ENCODE measurements at regions of chr4 and their contacts with region 1.

Region 1: DNA sequence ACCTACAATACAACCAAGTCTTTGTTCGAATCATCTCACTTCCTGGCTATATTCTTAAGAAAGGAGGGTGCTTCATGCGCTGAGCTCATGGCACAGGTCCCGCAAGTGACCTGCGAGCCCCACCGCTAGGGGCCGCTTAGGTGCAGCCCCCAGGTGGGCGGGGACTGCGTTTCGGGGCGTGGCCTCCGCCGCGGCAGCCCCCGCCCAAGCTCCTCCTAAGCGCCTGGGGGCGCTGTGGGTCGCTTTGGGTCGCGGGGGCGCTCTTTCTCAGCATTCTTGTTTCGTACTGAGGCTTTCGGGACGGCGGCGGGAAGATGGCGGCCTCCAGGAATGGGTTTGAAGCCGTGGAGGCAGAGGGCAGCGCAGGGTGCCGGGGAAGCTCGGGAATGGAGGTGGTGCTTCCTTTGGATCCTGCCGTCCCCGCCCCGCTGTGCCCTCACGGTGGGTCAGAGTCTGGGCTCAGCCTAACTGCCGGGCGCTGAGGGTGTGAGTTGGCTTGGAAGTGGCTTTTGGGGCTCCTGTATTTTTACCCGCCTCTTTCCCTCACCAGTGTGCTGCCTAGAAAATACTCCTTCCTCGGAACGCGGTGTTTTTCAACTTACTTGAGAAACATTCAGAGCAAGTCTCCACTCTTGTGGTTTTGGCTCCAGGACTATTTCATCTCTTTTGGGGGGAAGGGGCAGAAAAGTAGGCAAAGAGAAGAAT is at the start of gene ZCCHC4:
- DNase-seq: peak; percentile 89
- ATAC-seq: peak; percentile 100
- H3K4me3 Mint-ChIP-seq: peak within 1 kb of the TSS; percentile 99
- H3K27ac Mint-ChIP-seq: peak within 1 kb of the TSS; percentile 94
- H3K4me1 Mint-ChIP-seq: peaks cover 28% of the 10 kb centered on the region
- H3K27me3 Mint-ChIP-seq: peaks cover 2% of the 10 kb centered on the region
- CTCF ChIP-seq: peak; percentile 93
- total RNA-seq, gene ZCCHC4: 12.0 to 12.8 TPM

Region 2: GRCh38 chr4:25180524-25181131 is 132.0 kb before region 1 on chr4:
- CTCF ChIA-PET with region 1: interaction called, 12 read pairs
- POLR2A ChIA-PET with region 1: no interaction called
- intact Hi-C with region 1: no loop called
- DNase-seq: peak; percentile 57
- ATAC-seq: peak; percentile 71
- H3K4me3 Mint-ChIP-seq: no peak overlapping the region
- H3K27ac Mint-ChIP-seq: no peak overlapping the region
- H3K4me1 Mint-ChIP-seq: peaks cover 21% of the 10 kb centered on the region
- H3K27me3 Mint-ChIP-seq: no peaks in the 10 kb centered on the region
- CTCF ChIP-seq: peak; percentile 84

Region 3: GRCh38 chr4:25271866-25272265 is 40.8 kb before region 1 on chr4:
- CTCF ChIA-PET with region 1: interaction called, 10 read pairs
- POLR2A ChIA-PET with region 1: no interaction called
- intact Hi-C with region 1: no loop called
- DNase-seq: no peak
- ATAC-seq: no peak
- H3K4me3 Mint-ChIP-seq: no peak overlapping the region
- H3K27ac Mint-ChIP-seq: no peak overlapping the region
- H3K4me1 Mint-ChIP-seq: no peaks in the 10 kb centered on the region
- H3K27me3 Mint-ChIP-seq: no peaks in the 10 kb centered on the region
- CTCF ChIP-seq: no peak

Region 4: DNA sequence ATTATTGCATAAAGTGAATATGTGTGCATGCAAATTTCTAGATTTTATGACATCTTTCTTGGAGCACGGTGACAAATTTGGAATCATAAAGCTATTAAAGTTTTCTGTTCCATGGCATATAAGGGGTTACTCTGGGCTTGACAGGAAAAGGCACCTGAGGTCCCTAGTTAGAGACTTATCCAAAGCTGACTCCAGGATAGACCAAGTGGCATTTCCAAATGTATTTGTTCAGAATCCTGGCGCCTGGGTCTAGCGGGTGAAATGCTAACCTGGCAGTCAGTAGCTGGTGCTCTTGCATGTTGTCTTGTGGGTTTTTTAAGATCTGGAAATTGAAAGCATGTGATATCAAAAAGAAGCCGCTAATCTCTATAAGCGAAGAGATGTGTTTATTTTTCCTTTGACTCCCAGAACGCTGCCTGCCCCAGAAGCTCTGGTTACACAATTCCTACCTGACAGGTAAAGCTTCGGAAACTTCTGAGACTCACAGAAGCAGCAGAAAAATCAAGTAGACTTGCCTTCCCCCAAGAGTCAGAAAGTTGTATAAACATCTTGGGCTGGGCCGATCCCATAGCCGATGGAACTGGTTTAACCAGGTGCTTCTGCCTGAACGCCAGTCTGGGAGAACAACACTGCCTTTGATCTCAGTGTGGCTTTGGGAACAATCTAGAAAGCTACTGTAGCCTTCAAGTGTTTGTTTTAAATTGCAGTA is 13.0 kb before region 1 on chr4:
- CTCF ChIA-PET with region 1: interaction called, 15 read pairs
- POLR2A ChIA-PET with region 1: no interaction called
- intact Hi-C with region 1: no loop called
- DNase-seq: no peak
- ATAC-seq: no peak
- H3K4me3 Mint-ChIP-seq: no peak overlapping the region
- H3K27ac Mint-ChIP-seq: no peak overlapping the region
- H3K4me1 Mint-ChIP-seq: peaks cover 3% of the 10 kb centered on the region
- H3K27me3 Mint-ChIP-seq: peaks cover 12% of the 10 kb centered on the region
- CTCF ChIP-seq: no peak

Region 5: DNA sequence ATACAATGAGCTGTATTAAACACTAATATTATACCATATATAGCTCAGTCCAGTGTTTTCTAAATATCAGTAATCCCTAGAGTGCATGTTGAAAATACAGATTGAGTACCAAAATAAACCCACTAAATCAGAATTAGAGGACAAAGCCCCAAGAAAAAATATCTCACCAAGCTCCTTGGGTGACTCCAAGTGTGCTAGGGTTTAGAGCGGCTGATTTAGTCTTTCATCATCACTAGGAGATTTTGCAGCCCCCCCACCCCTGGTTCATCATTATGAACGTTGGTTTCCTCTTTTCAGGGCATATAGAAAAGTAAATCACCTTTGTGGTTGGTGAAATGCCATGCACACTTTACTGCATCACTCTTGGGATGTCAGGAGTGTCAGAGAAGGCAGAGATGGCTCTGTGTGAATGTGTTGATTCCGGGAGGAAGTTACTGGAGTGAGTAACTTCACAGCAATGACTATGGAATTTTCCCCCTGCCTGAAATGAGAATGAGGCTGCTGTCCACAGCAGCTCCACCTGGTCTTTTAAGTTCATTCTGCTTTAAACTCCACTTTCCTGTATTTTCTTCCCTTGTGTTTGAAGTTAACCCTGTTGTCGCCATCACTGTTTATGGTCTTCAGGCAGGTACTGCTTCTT is 39.2 kb after region 1 on chr4:
- CTCF ChIA-PET with region 1: interaction called, 15 read pairs
- POLR2A ChIA-PET with region 1: no interaction called
- intact Hi-C with region 1: no loop called
- DNase-seq: no peak
- ATAC-seq: no peak
- H3K4me3 Mint-ChIP-seq: no peak overlapping the region
- H3K27ac Mint-ChIP-seq: no peak overlapping the region
- H3K4me1 Mint-ChIP-seq: peaks cover 3% of the 10 kb centered on the region
- H3K27me3 Mint-ChIP-seq: no peaks in the 10 kb centered on the region
- CTCF ChIP-seq: no peak

Region 6: GRCh38 chr4:25376754-25377571 is 64.3 kb after region 1 on chr4 and contains the start of gene ANAPC4:
- CTCF ChIA-PET with region 1: interaction called, 11 read pairs
- POLR2A ChIA-PET with region 1: interaction called, 4 read pairs
- intact Hi-C with region 1: loop called (anchors 2 kb)
- DNase-seq: peak; percentile 98
- ATAC-seq: peak; percentile 97
- H3K4me3 Mint-ChIP-seq: no peak within 1 kb of the TSS
- H3K27ac Mint-ChIP-seq: peak within 1 kb of the TSS; percentile 85
- H3K4me1 Mint-ChIP-seq: peaks cover 7% of the 10 kb centered on the region
- H3K27me3 Mint-ChIP-seq: no peaks in the 10 kb centered on the region
- CTCF ChIP-seq: no peak
- total RNA-seq, gene ANAPC4: 29.2 to 31.4 TPM

Region 7: DNA sequence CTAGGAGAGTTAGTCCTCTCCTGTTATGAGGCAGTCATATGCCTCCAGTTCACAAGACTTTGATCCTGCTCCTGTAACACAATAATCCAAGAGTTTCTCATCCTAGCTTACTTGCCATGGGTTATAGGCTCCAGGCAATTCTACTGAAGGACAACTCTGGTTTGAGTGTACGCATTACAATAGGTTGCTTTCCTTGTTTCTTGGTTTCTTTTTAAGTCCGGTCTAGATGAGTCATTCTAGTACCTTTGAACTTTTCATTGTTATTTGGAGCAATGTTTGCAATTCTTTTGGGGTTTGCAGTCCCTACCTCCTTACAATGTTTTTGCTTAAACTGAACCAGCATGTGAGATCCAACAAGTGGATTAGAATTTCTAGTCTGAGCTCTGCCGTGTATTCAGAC is 173.5 kb after region 1 on chr4:
- CTCF ChIA-PET with region 1: no interaction called
- POLR2A ChIA-PET with region 1: no interaction called
- intact Hi-C with region 1: no loop called
- DNase-seq: no peak
- ATAC-seq: no peak
- H3K4me3 Mint-ChIP-seq: no peak overlapping the region
- H3K27ac Mint-ChIP-seq: no peak overlapping the region
- H3K4me1 Mint-ChIP-seq: peaks cover 2% of the 10 kb centered on the region
- H3K27me3 Mint-ChIP-seq: peaks cover 7% of the 10 kb centered on the region
- CTCF ChIP-seq: no peak

Region 8: DNA sequence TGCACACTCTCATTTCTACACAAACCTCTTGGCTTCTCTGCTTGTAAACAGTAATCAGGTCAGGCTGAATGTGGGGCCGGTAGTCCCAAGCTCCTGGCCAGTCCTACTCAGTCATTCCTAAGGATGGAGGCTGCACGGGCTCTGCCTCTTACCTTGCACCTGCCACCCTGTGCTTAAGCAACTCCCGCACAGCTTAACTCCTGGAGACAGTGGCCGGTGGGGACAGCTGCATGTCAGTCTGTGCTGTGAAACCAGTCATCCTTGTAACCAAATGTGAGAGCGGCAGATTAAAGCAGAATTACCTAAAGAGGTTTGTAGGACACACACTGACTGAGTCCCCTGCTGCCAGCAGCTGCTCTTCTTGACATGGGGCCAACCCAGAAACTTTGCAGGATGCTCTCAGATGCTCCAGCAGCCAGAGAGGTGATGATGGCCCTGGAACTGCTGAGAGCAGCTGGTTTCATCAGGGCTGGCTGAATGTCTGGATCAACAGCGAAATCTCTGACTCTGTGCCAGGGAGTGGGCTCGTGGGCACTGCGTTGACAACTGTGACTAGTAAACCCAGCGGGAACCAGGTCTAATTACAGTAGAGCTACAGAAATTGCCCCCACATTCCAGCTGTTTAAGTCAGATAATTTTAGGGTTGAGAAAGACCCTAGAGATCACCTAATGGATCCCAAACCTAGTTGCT is 188.1 kb after region 1 on chr4:
- CTCF ChIA-PET with region 1: no interaction called
- POLR2A ChIA-PET with region 1: no interaction called
- intact Hi-C with region 1: no loop called
- DNase-seq: no peak
- ATAC-seq: no peak
- H3K4me3 Mint-ChIP-seq: no peak overlapping the region
- H3K27ac Mint-ChIP-seq: no peak overlapping the region
- H3K4me1 Mint-ChIP-seq: no peaks in the 10 kb centered on the region
- H3K27me3 Mint-ChIP-seq: no peaks in the 10 kb centered on the region
- CTCF ChIP-seq: no peak

Region 9: GRCh38 chr4:25710637-25711036 is 398.0 kb after region 1 on chr4:
- CTCF ChIA-PET with region 1: no interaction called
- POLR2A ChIA-PET with region 1: no interaction called
- intact Hi-C with region 1: no loop called
- DNase-seq: no peak
- ATAC-seq: no peak
- H3K4me3 Mint-ChIP-seq: no peak overlapping the region
- H3K27ac Mint-ChIP-seq: no peak overlapping the region
- H3K4me1 Mint-ChIP-seq: no peaks in the 10 kb centered on the region
- H3K27me3 Mint-ChIP-seq: no peaks in the 10 kb centered on the region
- CTCF ChIP-seq: no peak